Activated naive CD4-positive, alpha-beta T cell treated with anti-CD3 and anti-CD28 coated beads for 36 hours (primary cell): ENCODE measurements at regions of chr3 and their contacts with region 1.

Region 1: DNA sequence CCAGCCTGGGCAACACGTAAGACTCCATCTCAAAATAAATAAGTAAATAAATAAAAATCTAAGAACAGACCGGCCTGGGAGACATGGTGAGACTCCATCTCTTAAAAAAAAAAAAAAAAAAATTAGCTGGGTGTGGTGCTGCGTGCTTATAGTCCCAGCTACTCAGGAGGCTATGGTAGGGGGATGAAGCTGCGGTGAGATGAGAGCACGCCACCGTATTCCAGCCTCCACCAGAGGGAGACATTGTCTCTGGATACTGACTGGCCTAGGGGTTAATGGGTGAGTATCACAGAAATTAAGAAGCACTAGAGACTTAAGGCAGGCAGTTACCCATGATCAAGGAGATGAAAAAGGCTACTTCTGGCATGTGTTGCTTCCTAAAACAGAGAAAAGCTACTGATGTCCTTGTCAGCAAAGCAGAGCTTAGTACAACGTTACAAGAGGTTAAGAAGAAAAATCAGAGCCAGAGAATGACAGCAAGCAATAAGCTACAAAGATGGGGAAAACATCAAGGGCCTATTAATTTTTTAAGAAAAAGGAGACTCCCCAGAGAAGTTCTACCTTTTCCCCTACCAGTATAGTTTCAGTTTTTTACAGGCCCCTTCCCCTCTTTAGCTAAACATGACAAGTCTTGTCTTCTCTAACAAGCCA is 8.6 kb downstream of the TFRC start:
- DNase-seq: peak; percentile 81
- H3K4me3 Mint-ChIP-seq: no peak overlapping the region
- H3K27ac Mint-ChIP-seq: peak overlapping the region; percentile 82
- H3K4me1 Mint-ChIP-seq: peaks cover 34% of the 10 kb centered on the region
- H3K27me3 Mint-ChIP-seq: no peaks in the 10 kb centered on the region

Region 2: DNA sequence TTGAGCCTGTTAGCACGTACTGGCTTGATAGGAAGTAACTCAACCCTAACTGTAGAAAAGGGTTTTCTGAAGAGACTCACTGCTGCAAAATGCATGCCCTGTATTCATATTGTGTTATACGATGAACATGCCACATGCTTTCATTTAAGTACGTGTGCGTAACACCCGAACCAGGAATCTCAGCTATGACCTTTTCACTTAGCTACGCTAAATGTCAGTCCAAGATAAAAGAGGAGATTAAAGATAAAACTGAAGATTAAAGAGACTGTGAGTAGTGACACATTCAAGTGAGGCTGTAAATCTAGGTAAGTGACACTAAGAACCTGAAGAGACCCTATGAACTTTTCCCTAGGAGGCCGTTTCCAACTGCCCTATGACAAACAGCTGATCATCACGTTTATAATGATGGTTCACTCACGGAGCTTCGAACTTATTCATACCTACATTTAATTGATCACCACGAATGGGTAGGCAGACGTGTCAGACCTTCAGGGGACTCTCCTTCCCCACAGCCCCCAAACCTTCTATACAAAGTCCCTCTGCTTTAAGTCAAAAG is 23.7 kb before region 1 on chr3:
- CTCF ChIA-PET with region 1: interaction called, 10 read pairs
- intact Hi-C with region 1: no loop called
- DNase-seq: no peak
- H3K4me3 Mint-ChIP-seq: no peak overlapping the region
- H3K27ac Mint-ChIP-seq: peak overlapping the region; percentile 2
- H3K4me1 Mint-ChIP-seq: peaks cover 1% of the 10 kb centered on the region
- H3K27me3 Mint-ChIP-seq: no peaks in the 10 kb centered on the region

Region 3: DNA sequence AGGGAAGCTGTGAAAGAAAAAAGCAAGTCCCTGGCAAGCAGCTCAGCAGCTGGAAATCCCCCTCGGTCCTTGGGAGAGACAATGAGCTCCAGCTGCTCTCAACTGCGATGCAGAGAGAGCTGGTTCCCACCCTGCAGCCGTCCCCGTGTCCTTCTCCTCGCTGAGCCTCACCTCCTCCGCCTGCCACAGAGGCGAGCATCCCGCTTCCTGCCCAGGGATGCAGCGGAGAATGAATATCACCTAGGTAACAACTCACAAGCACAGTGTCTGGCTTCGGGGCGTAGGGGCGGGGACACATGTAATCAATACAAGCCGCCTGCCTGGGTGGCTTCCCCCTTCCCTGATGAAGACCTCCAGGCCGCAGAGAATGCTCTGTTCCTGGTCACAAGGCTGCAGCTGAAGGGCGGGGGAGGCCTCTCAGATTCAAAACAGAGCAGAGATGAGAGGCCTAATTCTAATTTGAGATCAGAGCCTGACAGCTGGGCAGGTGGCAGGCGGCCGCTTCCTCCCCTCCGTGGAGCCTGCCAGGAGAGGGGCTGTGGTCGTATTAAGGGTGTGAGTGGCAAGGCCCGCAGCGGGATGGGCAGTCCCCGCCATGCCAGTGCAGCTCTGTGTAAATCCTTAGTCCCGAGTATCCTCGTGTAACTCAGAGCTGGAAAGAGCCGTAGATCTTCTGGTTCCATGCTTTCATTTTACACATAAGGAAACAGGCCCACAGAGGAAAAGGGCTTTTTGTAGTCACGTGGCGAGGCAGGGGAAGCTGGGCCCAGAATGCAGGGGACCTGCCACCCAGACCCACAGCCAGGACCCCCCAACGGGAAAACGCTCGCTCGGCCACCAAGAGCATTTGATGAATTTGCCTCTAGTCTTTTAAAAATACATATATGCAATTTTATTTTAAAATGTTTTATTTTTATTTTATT is 113.6 kb after region 1 on chr3:
- CTCF ChIA-PET with region 1: interaction called, 186 read pairs
- intact Hi-C with region 1: loop called (anchors 1 kb)
- DNase-seq: peak; percentile 46
- H3K4me3 Mint-ChIP-seq: peak overlapping the region; percentile 24
- H3K27ac Mint-ChIP-seq: no peak overlapping the region
- H3K4me1 Mint-ChIP-seq: peaks cover 42% of the 10 kb centered on the region
- H3K27me3 Mint-ChIP-seq: no peaks in the 10 kb centered on the region

Region 4: DNA sequence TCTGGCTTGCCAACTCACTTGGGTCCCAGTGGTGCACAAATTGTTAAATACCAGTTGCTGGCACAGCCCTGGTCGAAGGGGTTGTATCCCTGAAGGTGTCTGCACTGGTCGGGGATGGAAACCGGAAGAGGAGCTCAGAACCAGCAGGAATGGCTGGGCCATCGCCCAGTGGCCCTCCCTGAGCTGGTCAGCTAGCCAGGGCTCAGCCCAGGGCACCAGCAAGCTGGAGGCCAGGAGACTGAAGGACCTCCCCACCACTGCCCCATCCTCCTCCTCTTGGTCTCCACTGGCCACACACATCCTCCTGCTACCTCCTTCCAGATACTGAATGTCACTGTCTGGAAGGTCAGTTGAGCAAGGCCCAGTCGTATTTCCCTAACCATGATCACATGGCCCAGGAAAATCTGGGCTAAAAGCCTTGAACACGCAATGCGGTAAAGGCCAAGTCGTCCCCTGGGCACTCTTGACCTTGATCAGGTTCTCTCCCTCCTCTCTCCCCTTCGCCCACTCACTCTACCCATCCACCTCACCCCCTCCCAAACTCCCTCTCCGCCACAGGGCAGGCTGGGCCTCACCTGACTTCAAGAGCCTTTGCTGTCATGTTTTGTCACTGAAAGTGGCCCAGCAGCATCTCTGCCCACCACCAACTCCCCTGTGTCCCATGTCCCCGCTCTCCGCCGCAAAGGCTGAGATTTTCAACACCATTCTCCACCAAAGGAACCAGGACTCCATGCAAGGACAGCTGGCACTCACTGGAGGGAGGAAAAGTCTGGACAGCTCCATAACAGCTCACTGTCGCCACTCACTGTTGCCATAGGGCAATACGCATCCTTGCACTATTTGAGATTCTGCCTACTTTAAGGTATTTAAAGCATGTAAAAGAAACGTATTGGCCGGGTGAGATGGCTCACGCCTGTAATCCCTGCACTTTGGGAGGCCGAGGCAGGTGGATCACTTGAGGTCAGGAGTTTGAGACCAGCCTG is 125.7 kb after region 1 on chr3:
- CTCF ChIA-PET with region 1: interaction called, 186 read pairs
- intact Hi-C with region 1: loop called (anchors 1 kb)
- DNase-seq: no peak
- H3K4me3 Mint-ChIP-seq: no peak overlapping the region
- H3K27ac Mint-ChIP-seq: no peak overlapping the region
- H3K4me1 Mint-ChIP-seq: peaks cover 7% of the 10 kb centered on the region
- H3K27me3 Mint-ChIP-seq: no peaks in the 10 kb centered on the region

Region 5: GRCh38 chr3:196388956-196389355 is 315.6 kb after region 1 on chr3:
- CTCF ChIA-PET with region 1: no interaction called
- intact Hi-C with region 1: no loop called
- DNase-seq: no peak
- H3K4me3 Mint-ChIP-seq: no peak overlapping the region
- H3K27ac Mint-ChIP-seq: no peak overlapping the region
- H3K4me1 Mint-ChIP-seq: peaks cover 4% of the 10 kb centered on the region
- H3K27me3 Mint-ChIP-seq: no peaks in the 10 kb centered on the region

Region 6: DNA sequence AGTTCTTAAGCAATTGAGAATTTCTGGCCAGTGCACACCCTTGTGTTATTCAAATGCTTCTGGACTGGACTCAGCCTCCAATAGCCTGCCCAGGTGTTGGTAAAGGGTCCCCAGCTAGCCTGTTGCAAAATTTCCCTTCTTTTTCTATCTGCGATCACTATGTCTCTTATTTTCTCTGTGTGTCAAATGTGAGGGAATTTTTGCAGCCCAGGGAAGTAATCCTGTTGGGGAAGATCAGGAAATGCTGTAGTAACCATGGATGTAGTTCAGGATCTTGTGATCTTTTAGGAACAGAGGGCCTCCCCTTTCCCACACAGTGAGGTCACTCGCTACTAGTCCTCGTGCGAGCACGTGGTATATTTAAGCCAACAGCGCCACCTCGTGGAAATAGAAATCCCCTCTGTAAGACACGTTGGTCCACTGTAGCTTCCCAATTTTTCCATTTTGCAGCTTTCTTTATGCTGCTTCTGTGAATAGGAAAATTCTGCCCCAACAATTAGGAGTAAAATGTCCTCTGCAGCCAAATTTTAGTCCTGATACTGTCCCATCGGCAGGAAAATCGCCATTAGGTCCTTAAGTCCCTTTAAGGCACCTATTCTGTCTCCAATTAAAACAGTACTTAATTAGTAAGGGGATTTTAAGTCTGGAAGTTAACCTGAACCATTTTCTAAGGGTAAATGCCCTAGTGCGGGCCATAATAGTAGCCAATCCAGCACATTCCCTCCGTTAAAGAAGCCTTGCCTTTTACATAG is 445.8 kb after region 1 on chr3:
- CTCF ChIA-PET with region 1: no interaction called
- intact Hi-C with region 1: loop called (anchors 5 kb)
- DNase-seq: peak; percentile 81
- H3K4me3 Mint-ChIP-seq: no peak overlapping the region
- H3K27ac Mint-ChIP-seq: no peak overlapping the region
- H3K4me1 Mint-ChIP-seq: no peaks in the 10 kb centered on the region
- H3K27me3 Mint-ChIP-seq: no peaks in the 10 kb centered on the region